ENCODE measurements at regions of chr18 and their contacts with region 1.

Region 1: DNA sequence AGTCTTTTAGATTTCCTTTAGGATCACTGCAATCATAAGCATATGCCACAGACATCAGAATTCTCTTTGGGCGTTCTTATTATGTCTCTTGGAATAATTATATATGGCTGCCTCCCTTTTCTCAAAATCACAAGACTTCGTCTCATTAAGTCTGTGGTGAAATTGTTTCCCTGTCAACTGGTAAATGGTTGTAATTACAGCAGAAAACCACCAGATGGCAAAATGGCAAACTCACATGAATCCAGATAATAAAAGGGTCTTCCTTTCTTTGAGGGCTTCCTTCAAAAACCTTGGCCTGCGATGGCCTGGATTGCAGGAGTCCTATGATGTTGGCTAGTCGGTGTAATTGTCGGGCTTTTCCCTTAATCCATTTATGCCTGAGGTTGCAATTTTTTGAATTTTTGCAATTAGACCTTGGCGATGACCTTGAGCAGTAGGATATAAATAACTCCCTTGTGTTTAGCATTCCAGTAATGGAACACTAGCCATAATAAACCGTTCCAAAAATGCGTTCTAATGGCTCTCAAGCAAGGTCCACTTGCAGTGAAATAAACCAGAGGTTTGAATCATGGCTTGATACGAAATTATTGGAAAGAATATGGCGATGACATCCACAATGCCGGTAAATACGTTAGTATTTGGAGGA is 656.4 kb downstream of the MBD2 start:
- DNase-seq: no peak
- H3K4me3 ChIP-seq: no peak overlapping the region
- H3K27ac ChIP-seq: peak overlapping the region in 5 of 8 donors; percentile 10 to 37 (median 33)
- H3K4me1 ChIP-seq: peaks cover 0 to 7% (median 0%) of the 10 kb centered on the region in 6 donors
- H3K27me3 ChIP-seq: no peaks in the 10 kb centered on the region
- CTCF ChIP-seq: peak; percentile 30 to 68 (median 58)
- POLR2A ChIP-seq: no peak

Region 2: DNA sequence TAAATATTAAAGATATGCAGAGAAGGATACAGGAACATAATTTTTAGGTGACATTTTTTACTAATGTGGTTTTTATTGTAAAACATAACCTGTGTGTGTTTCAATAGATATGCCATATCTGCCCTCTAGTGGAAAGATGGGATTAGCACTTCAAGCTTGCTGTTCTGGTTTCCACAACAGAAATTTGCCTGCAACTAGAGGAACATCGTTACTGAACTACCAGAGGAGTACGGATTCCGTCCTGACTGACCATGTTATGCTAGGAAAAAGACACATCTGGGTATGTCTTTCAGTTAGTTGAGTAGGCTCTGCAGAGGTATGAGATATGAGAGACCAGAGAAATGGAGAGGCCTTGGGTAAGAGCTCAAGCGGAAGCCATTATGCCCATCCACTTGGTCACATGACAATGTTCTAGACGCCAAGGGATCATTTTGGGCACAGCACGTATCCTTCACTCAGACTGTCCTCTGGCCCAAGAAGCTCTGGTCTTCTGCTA is 551.5 kb after region 1 on chr18:
- intact Hi-C with region 1: loop called (anchors 10 kb)
- DNase-seq: no peak
- H3K4me3 ChIP-seq: peak overlapping the region in 2 of 8 donors; percentile 0 to 50
- H3K27ac ChIP-seq: no peak overlapping the region
- H3K4me1 ChIP-seq: peaks cover 0 to 6% (median 0%) of the 10 kb centered on the region in 6 donors
- H3K27me3 ChIP-seq: no peaks in the 10 kb centered on the region
- CTCF ChIP-seq: peak; percentile 14 to 80 (median 67)
- POLR2A ChIP-seq: no peak